Psoas muscle (tissue), 8 donors: ENCODE measurements at regions of chr12 and their contacts with region 1.

Region 1: GRCh38 chr12:132986001-132986912 is at the start of gene ZNF26:
- DNase-seq: peak; percentile 91 to 94
- ATAC-seq: peak; percentile 100
- H3K4me3 ChIP-seq: peak within 1 kb of the TSS; percentile 96
- H3K27ac ChIP-seq: peak within 1 kb of the TSS; percentile 92
- H3K4me1 ChIP-seq: peaks cover 6% of the 10 kb centered on the region
- H3K27me3 ChIP-seq: no peaks in the 10 kb centered on the region
- CTCF ChIP-seq: no peak
- total RNA-seq, gene ZNF26: 2.9 to 3.9 (median 3.3) TPM

Region 2: GRCh38 chr12:132828706-132829534 is 157.3 kb before region 1 on chr12 and contains the start of gene GOLGA3:
- intact Hi-C with region 1: loop called in 1 of 2 experiments (anchors 10 kb)
- DNase-seq: peak; percentile 94 to 97
- ATAC-seq: peak; percentile 97 to 99 (median 98)
- H3K4me3 ChIP-seq: peak within 1 kb of the TSS; percentile 96
- H3K27ac ChIP-seq: peak within 1 kb of the TSS; percentile 99
- H3K4me1 ChIP-seq: peaks cover 15% of the 10 kb centered on the region
- H3K27me3 ChIP-seq: no peaks in the 10 kb centered on the region
- CTCF ChIP-seq: no peak
- total RNA-seq, gene GOLGA3: 25.2 to 40.8 (median 31.5) TPM

Region 3: GRCh38 chr12:132921685-132922084 is 64.6 kb before region 1 on chr12:
- intact Hi-C with region 1: no loop called
- DNase-seq: no peak
- ATAC-seq: no peak
- H3K4me3 ChIP-seq: no peak overlapping the region
- H3K27ac ChIP-seq: no peak overlapping the region
- H3K4me1 ChIP-seq: no peaks in the 10 kb centered on the region
- H3K27me3 ChIP-seq: no peaks in the 10 kb centered on the region
- CTCF ChIP-seq: no peak

Region 4: DNA sequence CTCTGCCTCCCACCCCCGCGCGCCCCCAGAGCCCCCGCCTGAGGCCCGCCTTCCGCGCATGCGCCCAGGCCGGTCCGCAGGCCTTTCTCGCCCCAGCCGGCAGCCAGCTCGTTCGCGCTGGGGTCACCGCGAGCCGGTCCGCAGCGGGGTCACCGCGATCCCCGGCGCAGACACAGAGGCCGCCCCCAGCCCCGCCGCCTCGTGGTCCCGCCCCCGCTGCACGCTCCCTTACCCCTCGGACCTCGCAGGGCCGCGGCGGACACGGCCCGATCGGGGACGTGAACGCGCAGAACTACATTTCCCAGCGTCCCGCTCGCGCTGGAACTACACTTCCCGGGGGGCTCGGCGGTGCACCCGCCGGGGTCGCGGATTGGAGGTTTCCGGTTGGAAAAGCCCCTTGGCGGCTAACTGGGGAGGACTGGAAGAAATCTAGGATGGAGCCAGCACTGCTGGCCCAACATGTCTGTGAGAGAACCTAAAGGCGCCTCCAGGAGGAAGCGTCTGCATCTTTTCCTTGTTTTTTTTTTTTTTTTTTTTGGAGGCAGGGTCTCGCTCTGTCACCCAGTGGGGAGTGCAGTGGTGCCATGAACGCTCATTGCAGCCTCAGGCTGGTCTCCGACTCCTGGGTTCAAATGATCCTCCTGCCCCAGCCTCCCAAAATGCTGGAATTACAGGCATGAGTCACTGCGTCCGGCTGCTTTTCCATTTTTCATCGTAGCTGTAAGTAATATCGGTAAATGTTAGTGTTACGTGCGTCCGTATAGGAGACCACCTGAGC is 30.1 kb before region 1 on chr12 and contains the start of gene ZNF605:
- intact Hi-C with region 1: loop called in 1 of 2 experiments (anchors 2 kb)
- DNase-seq: peak; percentile 91 to 95
- ATAC-seq: peak; percentile 94 to 97 (median 96)
- H3K4me3 ChIP-seq: peak within 1 kb of the TSS; percentile 81
- H3K27ac ChIP-seq: peak within 1 kb of the TSS; percentile 88
- H3K4me1 ChIP-seq: peaks cover 3% of the 10 kb centered on the region
- H3K27me3 ChIP-seq: no peaks in the 10 kb centered on the region
- CTCF ChIP-seq: no peak
- total RNA-seq, gene ZNF605: 6.6 to 8.8 (median 7.8) TPM

Region 5: GRCh38 chr12:133037207-133038005 is 51.1 kb after region 1 on chr12 and contains the start of gene ZNF84:
- intact Hi-C with region 1: loop called (anchors 5 kb)
- DNase-seq: peak; percentile 97 to 98
- ATAC-seq: peak; percentile 98 to 99 (median 98)
- H3K4me3 ChIP-seq: peak within 1 kb of the TSS; percentile 78
- H3K27ac ChIP-seq: peak within 1 kb of the TSS; percentile 90
- H3K4me1 ChIP-seq: peaks cover 6% of the 10 kb centered on the region
- H3K27me3 ChIP-seq: no peaks in the 10 kb centered on the region
- CTCF ChIP-seq: no peak
- total RNA-seq, gene ZNF84: 9.0 to 11.5 (median 10.5) TPM

Region 6: GRCh38 chr12:133080368-133081158 is 94.3 kb after region 1 on chr12 and contains the start of gene ZNF140:
- intact Hi-C with region 1: loop called (anchors 2 to 5 kb)
- DNase-seq: peak; percentile 95 to 98
- ATAC-seq: peak; percentile 85 to 91 (median 86)
- H3K4me3 ChIP-seq: peak within 1 kb of the TSS; percentile 99
- H3K27ac ChIP-seq: peak within 1 kb of the TSS; percentile 99
- H3K4me1 ChIP-seq: peaks cover 3% of the 10 kb centered on the region
- H3K27me3 ChIP-seq: no peaks in the 10 kb centered on the region
- CTCF ChIP-seq: peak; percentile 31
- total RNA-seq, gene ZNF140: 3.9 to 9.8 (median 7.5) TPM

Region 7: GRCh38 chr12:133130038-133130807 is 144.0 kb after region 1 on chr12 and contains the starts of genes ZNF10 and ZNF891:
- intact Hi-C with region 1: loop called (anchors 2 to 5 kb)
- DNase-seq: peak; percentile 96 to 98
- ATAC-seq: peak; percentile 98 to 99 (median 98)
- H3K4me3 ChIP-seq: peak within 1 kb of the TSS; percentile 75
- H3K27ac ChIP-seq: peak within 1 kb of the TSS; percentile 94
- H3K4me1 ChIP-seq: peaks cover 7% of the 10 kb centered on the region
- H3K27me3 ChIP-seq: no peaks in the 10 kb centered on the region
- CTCF ChIP-seq: no peak
- total RNA-seq, gene ZNF10: 2.5 to 5.3 (median 3.3) TPM
- total RNA-seq, gene ZNF891: 0.69 to 1.1 (median 0.93) TPM